Dorsolateral prefrontal cortex (tissue), 120 donors: ENCODE measurements at regions of chr20 and their contacts with region 1.

Region 1: DNA sequence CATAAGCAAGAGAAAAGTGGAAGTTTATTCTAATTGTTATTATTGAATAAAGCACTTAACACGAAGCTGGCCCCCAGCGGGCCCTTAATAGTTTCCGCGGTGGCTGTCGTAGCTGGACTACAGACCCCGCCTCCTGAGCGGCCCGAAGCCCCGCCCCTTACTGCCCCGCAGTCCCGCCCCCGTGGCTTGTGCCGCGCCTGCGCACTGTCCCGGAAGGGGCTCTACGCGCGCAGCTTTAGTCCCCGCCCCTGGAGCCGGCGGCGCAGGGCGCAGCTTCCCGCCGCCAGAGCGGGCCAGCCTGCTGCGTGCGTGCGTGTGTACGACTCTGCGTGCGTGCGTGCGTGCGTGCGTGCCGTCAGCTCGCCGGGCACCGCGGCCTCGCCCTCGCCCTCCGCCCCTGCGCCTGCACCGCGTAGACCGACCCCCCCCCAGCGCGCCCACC is at the start of gene VAPB:
- DNase-seq: peak; percentile 90 to 98 (median 93)
- H3K4me3 ChIP-seq: peak within 1 kb of the TSS; percentile 57 to 99 (median 86)
- H3K27ac ChIP-seq: peak within 1 kb of the TSS in 57 of 59 donors; percentile 32 to 95 (median 85)
- H3K27me3 ChIP-seq: no peaks in the 10 kb centered on the region
- CTCF ChIP-seq: peak in 30 of 56 donors; percentile 5 to 49 (median 26)
- total RNA-seq, gene VAPB: 59.1 to 124 (median 96.7) TPM

Region 2: DNA sequence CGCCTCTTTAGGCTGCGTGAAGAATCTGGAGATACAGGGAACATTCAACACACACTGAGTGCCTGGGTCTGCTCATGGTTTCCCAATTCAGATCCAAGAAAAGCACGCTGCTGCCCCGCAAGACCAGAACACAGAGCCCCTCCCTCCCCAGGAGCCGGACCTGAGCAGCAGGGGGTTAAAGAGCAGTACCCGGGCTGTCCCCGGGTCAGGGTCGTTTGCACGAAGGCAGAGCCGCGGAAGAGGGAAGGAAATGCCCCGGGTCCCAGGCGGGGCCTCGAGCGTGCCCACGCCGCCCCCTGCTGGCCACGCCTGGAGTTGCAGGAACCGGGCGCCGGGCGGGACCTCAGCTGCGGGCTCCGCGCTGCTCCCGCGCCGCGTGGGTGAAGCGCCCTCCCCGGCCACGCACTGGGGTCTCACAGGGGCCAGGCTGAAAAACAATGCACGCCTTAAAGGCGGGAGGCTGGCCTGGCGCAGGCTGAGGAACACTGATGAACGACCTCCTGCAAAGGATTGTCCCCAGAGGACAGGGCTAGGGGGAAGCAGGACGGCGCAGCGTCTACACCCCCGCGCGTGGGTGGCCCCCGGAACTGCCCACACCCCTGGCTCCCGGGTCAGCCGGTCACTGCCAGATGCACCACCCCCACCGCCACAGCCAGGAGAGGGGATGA is 209.3 kb before region 1 on chr20:
- intact Hi-C with region 1: no loop called
- DNase-seq: peak in 7 of 10 donors; percentile 15 to 82 (median 50)
- H3K4me3 ChIP-seq: peak overlapping the region in 58 of 59 donors; percentile 3 to 64 (median 46)
- H3K27ac ChIP-seq: peak overlapping the region in 3 of 59 donors; percentile 39 to 56 (median 56)
- H3K27me3 ChIP-seq: peaks cover 0 to 8% (median 0%) of the 10 kb centered on the region in 45 donors
- CTCF ChIP-seq: peak; percentile 92 to 100 (median 99)

Region 3: DNA sequence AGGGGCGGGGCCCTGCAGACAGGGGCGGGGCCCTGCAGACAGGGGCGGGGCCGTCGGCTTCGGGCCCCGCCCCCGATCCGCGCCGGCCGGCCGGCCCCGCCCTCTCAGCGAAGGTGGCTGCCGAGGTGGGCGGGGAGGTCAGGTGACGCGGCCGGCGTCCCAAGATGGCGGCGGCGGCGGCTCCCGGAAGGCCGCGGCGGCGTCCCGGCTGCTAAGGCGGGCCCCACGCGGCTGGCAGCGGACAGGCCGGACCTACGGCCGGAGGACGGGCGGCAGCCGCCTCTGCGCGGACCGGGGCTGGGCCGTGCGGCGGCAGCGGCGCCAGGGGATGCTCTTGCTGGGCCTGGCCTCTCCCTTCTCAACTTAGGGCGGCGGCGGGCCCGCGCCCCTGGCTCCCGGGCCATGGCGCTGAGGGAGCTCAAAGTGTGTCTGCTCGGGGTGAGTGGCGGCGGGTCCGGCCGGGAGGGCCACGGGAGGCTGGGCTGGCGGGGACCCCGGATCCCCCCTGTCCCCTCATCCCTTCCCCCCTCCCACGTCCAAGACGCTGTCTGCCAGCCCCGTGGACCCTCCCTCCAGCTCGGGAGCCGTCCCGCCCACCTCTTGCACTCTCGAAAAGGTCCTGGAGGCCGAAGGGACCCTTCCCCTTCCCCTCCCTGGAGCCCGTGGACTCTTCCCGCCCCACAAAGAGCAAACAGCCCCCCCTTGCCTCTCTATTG is 79.2 kb before region 1 on chr20 and contains the start of gene RAB22A:
- intact Hi-C with region 1: loop called in 1 of 2 experiments (anchors 2 kb)
- DNase-seq: peak; percentile 49 to 89 (median 68)
- H3K4me3 ChIP-seq: peak within 1 kb of the TSS; percentile 68 to 100 (median 97)
- H3K27ac ChIP-seq: peak within 1 kb of the TSS in 57 of 59 donors; percentile 4 to 93 (median 80)
- H3K27me3 ChIP-seq: no peaks in the 10 kb centered on the region
- CTCF ChIP-seq: peak in 5 of 56 donors; percentile 9 to 30 (median 23)
- total RNA-seq, gene RAB22A: 25.8 to 51.7 (median 38.9) TPM

Region 4: GRCh38 chr20:58447511-58448391 is 58.8 kb after region 1 on chr20:
- intact Hi-C with region 1: loop called in 1 of 2 experiments (anchors 5 kb)
- DNase-seq: no peak
- H3K4me3 ChIP-seq: no peak overlapping the region
- H3K27ac ChIP-seq: no peak overlapping the region
- H3K27me3 ChIP-seq: no peaks in the 10 kb centered on the region
- CTCF ChIP-seq: peak in 52 of 56 donors; percentile 17 to 67 (median 51)